ENCODE measurements at regions of chr1 and their contacts with region 1.

Region 1: GRCh38 chr1:247906504-247907047 is 11.2 kb downstream of the OR2W3 start:
- DNase-seq: no peak
- ATAC-seq: peak; percentile 21
- H3K4me3 Mint-ChIP-seq: peak overlapping the region; percentile 79
- H3K27ac Mint-ChIP-seq: peak overlapping the region; percentile 80
- H3K4me1 Mint-ChIP-seq: peaks cover 26% of the 10 kb centered on the region
- H3K27me3 Mint-ChIP-seq: no peaks in the 10 kb centered on the region
- CTCF ChIP-seq: no peak

Region 2: DNA sequence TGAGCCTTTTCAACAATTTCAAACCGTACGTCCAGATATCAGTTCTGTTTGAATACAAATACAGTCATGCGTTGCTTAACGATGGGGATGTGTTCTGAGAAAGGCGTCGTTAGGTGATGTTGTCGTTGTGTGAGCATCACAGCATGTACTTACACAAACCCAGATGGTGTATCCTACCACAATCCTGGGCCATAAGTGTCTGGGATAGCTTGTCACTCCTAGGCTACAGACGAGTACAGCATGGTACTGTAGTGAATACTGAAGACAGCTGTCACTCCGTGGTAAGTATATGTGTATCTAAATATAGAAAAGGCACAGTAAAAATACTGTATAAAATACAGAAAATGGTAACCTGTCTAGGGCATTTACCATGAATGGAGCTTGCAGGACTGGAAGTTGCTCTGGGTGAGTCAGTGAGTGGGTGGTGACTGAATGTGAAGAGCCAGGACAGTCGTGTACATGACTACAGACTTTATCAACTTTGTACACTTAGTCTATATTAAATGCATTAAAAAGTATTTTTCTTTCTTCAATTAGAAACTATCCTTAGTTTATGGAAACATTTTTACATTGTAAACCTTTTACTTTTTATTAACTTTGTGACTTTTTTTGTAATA is 21.7 kb before region 1 on chr1:
- CTCF ChIA-PET with region 1: no interaction called
- POLR2A ChIA-PET with region 1: no interaction called
- intact Hi-C with region 1: loop called (anchors 1 kb)
- DNase-seq: no peak
- ATAC-seq: no peak
- H3K4me3 Mint-ChIP-seq: no peak overlapping the region
- H3K27ac Mint-ChIP-seq: no peak overlapping the region
- H3K4me1 Mint-ChIP-seq: no peaks in the 10 kb centered on the region
- H3K27me3 Mint-ChIP-seq: no peaks in the 10 kb centered on the region
- CTCF ChIP-seq: no peak